Testis (tissue), 5 donors: ENCODE measurements at regions of chr20 and their contacts with region 1.

Region 1: DNA sequence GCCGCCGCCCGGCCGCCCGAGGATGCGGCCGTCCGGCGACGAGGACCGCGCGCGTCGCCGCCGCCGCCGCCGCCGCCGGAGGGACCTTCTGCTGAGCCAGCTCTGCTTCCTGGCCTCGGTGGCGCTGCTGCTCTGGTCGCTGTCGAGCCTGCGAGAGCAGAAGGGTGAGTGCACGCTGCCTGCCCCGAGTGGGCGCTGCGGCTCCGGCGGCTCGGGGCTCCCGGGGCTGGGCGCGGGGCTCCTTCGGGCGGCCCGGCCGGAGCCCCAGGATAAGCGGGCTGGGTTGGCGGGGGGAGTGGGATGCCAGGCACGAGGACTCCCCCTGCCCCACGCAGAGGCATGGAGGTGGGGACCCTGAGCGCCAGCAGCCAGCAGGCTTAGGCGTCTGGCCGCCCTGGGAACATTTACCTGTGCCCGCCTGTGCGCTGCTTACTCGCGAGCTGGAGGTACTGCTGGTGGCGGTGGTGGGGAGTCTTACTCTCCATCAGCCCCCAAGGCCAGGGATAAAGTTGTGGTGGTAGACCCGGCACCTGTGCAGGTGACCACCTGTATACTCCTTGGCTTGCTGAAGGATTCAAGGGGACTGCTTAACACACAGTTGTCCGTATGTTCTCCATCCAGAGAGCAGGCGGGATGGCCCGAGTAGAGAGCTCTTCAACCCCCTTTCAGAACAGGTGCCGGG is 520 bp downstream of the SLC24A3 start:
- DNase-seq: peak; percentile 84
- H3K4me3 ChIP-seq: peak overlapping the region; percentile 50 to 60
- H3K27ac ChIP-seq: peak overlapping the region; percentile 27 to 50
- H3K4me1 ChIP-seq: no peaks in the 10 kb centered on the region
- H3K27me3 ChIP-seq: no peaks in the 10 kb centered on the region
- CTCF ChIP-seq: peak; percentile 37 to 46 (median 39)
- POLR2A ChIP-seq: no peak

Region 2: GRCh38 chr20:18971574-18971973 is 241.4 kb before region 1 on chr20:
- intact Hi-C with region 1: no loop called
- DNase-seq: no peak
- H3K4me3 ChIP-seq: no peak overlapping the region
- H3K27ac ChIP-seq: no peak overlapping the region
- H3K4me1 ChIP-seq: peaks cover 8% of the 10 kb centered on the region
- H3K27me3 ChIP-seq: no peaks in the 10 kb centered on the region
- CTCF ChIP-seq: no peak
- POLR2A ChIP-seq: no peak

Region 3: GRCh38 chr20:19583532-19584175 is 370.7 kb after region 1 on chr20:
- intact Hi-C with region 1: loop called (anchors 10 kb)
- DNase-seq: peak; percentile 87
- H3K4me3 ChIP-seq: no peak overlapping the region
- H3K27ac ChIP-seq: no peak overlapping the region
- H3K4me1 ChIP-seq: no peaks in the 10 kb centered on the region
- H3K27me3 ChIP-seq: no peaks in the 10 kb centered on the region
- CTCF ChIP-seq: peak; percentile 60 to 85 (median 74)
- POLR2A ChIP-seq: no peak

Region 4: DNA sequence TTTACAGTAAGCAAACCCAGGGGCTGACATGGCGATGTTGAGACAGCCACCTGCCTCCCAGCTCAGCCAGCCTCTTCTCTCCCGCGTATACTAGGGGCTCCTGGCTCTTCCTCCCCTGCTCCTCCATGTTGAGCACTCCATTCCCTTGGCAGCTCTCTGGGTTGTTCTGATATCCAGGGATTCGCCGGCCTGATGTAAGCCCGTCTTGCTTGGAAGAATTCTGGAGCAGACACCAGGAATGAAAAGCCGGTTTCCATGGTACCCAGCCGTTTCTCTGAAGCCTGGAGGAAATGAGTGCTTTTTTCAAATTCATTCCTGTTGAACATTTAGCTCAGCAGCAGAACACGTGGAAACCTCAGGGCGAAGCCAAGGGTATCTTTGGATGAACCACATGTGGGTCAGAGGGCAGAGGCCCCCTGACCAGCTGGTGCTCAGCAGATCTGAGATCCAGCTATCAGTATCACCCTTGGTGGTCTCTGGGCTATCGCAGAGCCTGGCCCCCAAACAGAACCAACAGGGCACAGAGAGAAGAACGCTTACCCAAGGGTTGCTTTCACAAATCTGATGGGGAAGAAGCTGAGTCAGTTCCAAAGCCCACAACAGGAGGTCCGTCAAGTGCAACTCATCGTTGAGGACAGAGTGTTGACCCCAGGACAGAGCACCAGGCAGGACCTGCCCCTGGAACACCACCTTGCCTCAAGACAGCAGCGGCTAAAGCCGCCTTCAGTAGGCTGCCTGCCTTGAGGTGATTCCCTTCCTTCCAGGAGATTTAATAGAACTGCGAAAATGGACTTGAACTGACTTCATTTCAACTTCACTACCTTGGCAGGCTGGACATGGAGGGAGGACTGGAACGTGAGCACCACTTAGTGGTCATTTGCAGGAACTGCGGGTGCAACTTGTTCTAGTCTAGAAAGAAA is 449.0 kb after region 1 on chr20:
- intact Hi-C with region 1: loop called (anchors 10 kb)
- DNase-seq: peak; percentile 88
- H3K4me3 ChIP-seq: no peak overlapping the region
- H3K27ac ChIP-seq: no peak overlapping the region
- H3K4me1 ChIP-seq: peaks cover 5% of the 10 kb centered on the region
- H3K27me3 ChIP-seq: no peaks in the 10 kb centered on the region
- CTCF ChIP-seq: peak; percentile 80 to 98 (median 97)
- POLR2A ChIP-seq: no peak